CD14-positive monocyte (primary cell): ENCODE measurements at regions of chr2 and their contacts with region 1.

Region 1: GRCh38 chr2:240586198-240586918 is at the start of gene CAPN10:
- DNase-seq: peak; percentile 94 to 97 (median 94)
- H3K4me3 ChIP-seq: peak within 1 kb of the TSS; percentile 46 to 83 (median 80)
- H3K4me3 Mint-ChIP-seq: peak within 1 kb of the TSS; percentile 92 to 93
- H3K27ac ChIP-seq: peak within 1 kb of the TSS; percentile 93 to 94
- H3K27ac Mint-ChIP-seq: peak within 1 kb of the TSS; percentile 95 to 99 (median 98)
- H3K4me1 ChIP-seq: peaks cover 35 to 45% of the 10 kb centered on the region in 2 donors
- H3K4me1 Mint-ChIP-seq: peaks cover 59% of the 10 kb centered on the region
- H3K27me3 ChIP-seq: no peaks in the 10 kb centered on the region
- H3K27me3 Mint-ChIP-seq: peaks cover 0 to 3% (median 2%) of the 10 kb centered on the region in 3 donors
- CTCF ChIP-seq: no peak
- polyA plus RNA-seq, gene CAPN10: 7.3 to 57.0 (median 7.4) TPM

Region 2: DNA sequence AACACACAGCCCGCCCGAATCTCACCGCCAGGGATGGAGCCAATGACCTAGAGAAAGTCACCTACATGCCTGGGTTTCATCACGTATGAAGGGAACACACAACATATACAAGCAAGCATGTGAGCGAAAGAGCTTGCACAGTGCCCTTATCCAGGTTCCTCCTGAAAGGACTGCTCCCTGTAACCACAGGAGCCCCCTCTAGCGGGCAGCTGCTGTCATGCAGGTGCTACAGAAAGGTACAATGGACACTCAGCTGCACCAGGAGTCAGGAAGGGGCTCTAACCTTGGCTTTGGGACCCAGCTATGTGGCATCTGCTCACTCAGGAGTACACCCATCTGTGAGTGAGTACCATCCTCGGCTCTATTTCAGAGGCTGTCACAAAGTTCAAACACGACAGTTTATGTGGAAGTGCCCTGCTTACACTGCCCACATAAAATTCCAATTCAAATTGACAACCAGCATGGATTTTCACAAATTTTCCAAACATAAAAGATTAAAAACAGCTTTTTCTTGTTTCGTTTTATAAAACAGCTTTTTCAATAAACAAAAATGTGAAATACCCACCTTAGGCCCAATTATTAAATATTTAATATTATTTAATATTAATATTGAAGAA is 564.8 kb before region 1 on chr2:
- intact Hi-C with region 1: loop called in 1 of 2 experiments (anchors 10 kb)
- DNase-seq: peak; percentile 51 to 65 (median 61)
- H3K4me3 ChIP-seq: no peak overlapping the region
- H3K4me3 Mint-ChIP-seq: no peak overlapping the region
- H3K27ac ChIP-seq: no peak overlapping the region
- H3K27ac Mint-ChIP-seq: peak overlapping the region in 1 of 7 donors; percentile 45
- H3K4me1 ChIP-seq: peaks cover 13 to 15% of the 10 kb centered on the region in 2 donors
- H3K4me1 Mint-ChIP-seq: peaks cover 16% of the 10 kb centered on the region
- H3K27me3 ChIP-seq: no peaks in the 10 kb centered on the region
- H3K27me3 Mint-ChIP-seq: peaks cover 0 to under 1% (median 0%) of the 10 kb centered on the region in 3 donors
- CTCF ChIP-seq: peak; percentile 84

Region 3: DNA sequence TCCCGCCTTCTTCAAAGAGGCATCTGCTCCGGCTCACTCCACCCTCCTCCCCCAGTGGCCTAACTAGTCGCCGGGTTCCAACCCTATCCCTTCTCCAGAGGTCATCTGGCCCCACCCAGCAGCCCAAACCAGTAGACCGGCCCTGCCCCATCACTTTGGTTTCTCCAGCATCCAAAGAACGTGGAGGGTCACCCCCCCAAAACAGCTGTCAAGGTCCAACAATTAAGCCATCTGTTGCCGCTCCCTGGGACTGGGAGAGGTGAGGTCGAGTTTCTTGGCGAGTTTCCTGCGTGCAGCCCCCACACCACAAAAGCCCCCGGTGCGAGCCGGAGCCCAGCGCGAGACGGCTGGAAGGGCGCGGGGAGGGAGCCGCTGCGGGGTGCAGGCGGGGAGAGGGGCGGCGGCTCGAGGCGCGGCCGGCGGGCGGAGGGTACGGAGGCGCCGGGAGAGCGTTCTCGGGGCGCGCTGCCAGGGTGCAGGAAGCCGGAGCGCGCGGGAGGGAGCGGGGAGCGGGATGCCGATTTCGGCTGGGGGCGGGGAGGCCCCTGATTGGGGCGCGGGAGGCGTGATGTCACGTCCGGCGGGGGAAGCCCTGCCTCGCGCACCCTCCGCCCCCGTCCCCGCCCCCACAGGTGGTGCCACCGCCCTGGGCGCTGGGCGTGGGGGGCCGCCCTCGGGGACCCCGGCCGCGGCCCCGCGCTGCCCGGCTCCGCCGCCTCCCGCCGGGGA is 151.5 kb before region 1 on chr2:
- intact Hi-C with region 1: no loop called
- DNase-seq: peak; percentile 10 to 24 (median 14)
- H3K4me3 ChIP-seq: peak overlapping the region in 1 of 3 experiments; percentile 60
- H3K4me3 Mint-ChIP-seq: peak overlapping the region; percentile 75 to 87
- H3K27ac ChIP-seq: no peak overlapping the region
- H3K27ac Mint-ChIP-seq: peak overlapping the region in 1 of 7 donors; percentile 46
- H3K4me1 ChIP-seq: peaks cover 0 to 17% of the 10 kb centered on the region in 2 donors
- H3K4me1 Mint-ChIP-seq: peaks cover 7% of the 10 kb centered on the region
- H3K27me3 ChIP-seq: peaks cover 19 to 39% of the 10 kb centered on the region in 2 donors
- H3K27me3 Mint-ChIP-seq: peaks cover 34 to 65% (median 49%) of the 10 kb centered on the region in 3 donors
- CTCF ChIP-seq: no peak

Region 4: DNA sequence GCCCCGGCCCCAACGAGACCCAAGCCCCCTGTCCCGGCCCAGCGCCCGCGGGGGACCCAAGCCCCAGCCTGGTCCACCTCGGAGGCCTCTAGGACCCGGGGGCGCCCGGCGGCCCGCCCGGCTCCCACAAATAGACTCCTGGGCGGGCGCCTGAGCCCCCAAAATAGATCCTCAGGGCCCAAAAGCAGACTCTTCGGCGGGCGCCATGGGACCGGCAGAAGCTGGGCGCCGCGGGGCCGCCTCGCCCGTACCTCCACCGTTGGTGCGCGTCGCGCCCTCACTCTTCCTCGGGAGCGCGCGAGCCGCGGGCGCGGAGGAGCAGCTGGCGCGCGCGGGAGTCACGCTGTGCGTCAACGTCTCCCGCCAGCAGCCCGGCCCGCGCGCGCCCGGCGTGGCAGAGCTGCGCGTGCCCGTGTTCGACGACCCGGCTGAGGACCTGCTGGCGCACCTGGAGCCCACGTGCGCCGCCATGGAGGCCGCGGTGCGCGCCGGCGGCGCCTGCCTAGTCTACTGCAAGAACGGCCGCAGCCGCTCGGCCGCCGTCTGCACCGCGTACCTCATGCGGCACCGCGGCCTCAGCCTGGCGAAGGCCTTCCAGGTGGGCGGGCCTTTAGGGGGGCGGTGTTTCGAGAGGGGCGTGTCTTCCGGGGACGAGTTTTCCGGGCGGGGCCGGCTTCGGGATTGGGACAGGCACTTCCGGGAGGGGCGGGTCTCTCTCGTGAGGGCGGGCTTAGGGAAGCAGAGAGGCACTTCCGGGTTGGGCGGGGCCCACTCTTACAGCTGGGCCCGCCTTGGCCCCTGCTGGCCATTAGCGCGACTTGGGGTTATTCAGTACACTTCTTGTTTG is 25.7 kb before region 1 on chr2:
- intact Hi-C with region 1: loop called in 1 of 2 experiments (anchors 2 kb)
- DNase-seq: peak; percentile 97 to 99 (median 99)
- H3K4me3 ChIP-seq: peak overlapping the region; percentile 66 to 80 (median 79)
- H3K4me3 Mint-ChIP-seq: peak overlapping the region; percentile 84 to 92
- H3K27ac ChIP-seq: peak overlapping the region; percentile 97 to 98
- H3K27ac Mint-ChIP-seq: peak overlapping the region; percentile 93 to 100 (median 97)
- H3K4me1 ChIP-seq: peaks cover 76 to 91% of the 10 kb centered on the region in 2 donors
- H3K4me1 Mint-ChIP-seq: peaks cover 73% of the 10 kb centered on the region
- H3K27me3 ChIP-seq: no peaks in the 10 kb centered on the region
- H3K27me3 Mint-ChIP-seq: peaks cover 0 to 7% (median 6%) of the 10 kb centered on the region in 3 donors
- CTCF ChIP-seq: peak; percentile 30

Region 5: DNA sequence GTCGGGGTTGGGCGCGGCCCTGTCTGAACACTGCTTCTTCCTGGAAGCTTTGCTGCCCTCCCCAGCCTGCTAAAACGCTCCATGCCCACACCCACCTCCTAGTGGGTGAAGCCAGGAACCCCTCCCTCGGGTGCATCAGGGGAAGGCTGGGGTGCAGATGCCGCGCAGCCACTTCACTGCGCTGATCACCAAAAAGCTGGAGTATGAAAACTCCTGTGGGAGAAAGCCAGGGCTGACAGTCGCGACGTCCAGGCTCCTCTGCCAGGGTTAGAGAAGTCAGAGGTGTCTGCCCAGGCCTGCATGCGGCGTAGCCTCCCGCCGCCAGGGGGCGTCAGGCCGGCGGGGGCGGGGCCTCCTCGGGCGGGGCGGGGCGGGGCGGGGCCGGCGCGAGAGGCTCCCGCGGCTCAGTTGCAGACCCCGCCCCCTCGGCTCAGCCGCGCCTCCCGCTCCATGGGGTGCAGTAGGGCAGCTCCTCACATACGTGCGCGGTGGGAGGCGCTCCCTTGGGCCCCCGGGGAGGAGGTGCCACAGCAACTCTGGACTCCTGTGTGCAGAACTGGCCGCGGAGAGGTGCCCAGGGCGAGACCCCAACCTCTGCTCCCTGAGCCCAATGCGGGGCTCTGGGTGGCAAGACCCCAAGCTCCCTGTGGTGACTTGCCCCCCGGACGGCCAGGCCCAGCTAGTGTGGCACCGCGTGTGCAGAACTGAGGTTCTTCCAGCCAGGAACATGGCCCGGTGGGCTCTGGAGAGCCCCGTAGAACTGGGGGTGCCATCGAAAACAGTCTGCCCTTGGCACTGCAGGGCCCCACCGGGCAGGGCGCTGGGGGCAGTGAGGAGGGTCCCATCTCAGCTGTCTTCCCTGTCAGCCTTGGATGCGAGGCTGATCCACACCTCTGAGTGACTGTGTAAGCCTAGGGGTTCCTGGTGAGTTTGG is 19.9 kb before region 1 on chr2:
- intact Hi-C with region 1: loop called (anchors 2 kb)
- DNase-seq: peak; percentile 88 to 93 (median 88)
- H3K4me3 ChIP-seq: peak overlapping the region; percentile 32 to 75 (median 68)
- H3K4me3 Mint-ChIP-seq: peak overlapping the region; percentile 86 to 95
- H3K27ac ChIP-seq: peak overlapping the region; percentile 95 to 97
- H3K27ac Mint-ChIP-seq: peak overlapping the region; percentile 97 to 100 (median 97)
- H3K4me1 ChIP-seq: peaks cover 85 to 90% of the 10 kb centered on the region in 2 donors
- H3K4me1 Mint-ChIP-seq: peaks cover 81% of the 10 kb centered on the region
- H3K27me3 ChIP-seq: no peaks in the 10 kb centered on the region
- H3K27me3 Mint-ChIP-seq: peaks cover 0 to 3% (median 2%) of the 10 kb centered on the region in 3 donors
- CTCF ChIP-seq: peak; percentile 99

Region 6: GRCh38 chr2:240624950-240625621 is 38.7 kb after region 1 on chr2 and contains the start of gene GPR35:
- intact Hi-C with region 1: loop called (anchors 2 to 5 kb)
- DNase-seq: peak; percentile 97 to 99 (median 98)
- H3K4me3 ChIP-seq: peak within 1 kb of the TSS; percentile 41 to 82 (median 66)
- H3K4me3 Mint-ChIP-seq: peak within 1 kb of the TSS; percentile 77 to 90
- H3K27ac ChIP-seq: peak within 1 kb of the TSS; percentile 96 to 99
- H3K27ac Mint-ChIP-seq: peak within 1 kb of the TSS; percentile 93 to 99 (median 97)
- H3K4me1 ChIP-seq: peaks cover 76 to 81% of the 10 kb centered on the region in 2 donors
- H3K4me1 Mint-ChIP-seq: peaks cover 65% of the 10 kb centered on the region
- H3K27me3 ChIP-seq: no peaks in the 10 kb centered on the region
- H3K27me3 Mint-ChIP-seq: peaks cover 0 to 1% (median 0%) of the 10 kb centered on the region in 3 donors
- CTCF ChIP-seq: peak; percentile 13
- polyA plus RNA-seq, gene GPR35: 30.6 to 37.8 (median 36.3) TPM